CD8-positive, alpha-beta memory T cell (primary cell): ENCODE measurements at regions of chr10 and their contacts with region 1.

Region 1: DNA sequence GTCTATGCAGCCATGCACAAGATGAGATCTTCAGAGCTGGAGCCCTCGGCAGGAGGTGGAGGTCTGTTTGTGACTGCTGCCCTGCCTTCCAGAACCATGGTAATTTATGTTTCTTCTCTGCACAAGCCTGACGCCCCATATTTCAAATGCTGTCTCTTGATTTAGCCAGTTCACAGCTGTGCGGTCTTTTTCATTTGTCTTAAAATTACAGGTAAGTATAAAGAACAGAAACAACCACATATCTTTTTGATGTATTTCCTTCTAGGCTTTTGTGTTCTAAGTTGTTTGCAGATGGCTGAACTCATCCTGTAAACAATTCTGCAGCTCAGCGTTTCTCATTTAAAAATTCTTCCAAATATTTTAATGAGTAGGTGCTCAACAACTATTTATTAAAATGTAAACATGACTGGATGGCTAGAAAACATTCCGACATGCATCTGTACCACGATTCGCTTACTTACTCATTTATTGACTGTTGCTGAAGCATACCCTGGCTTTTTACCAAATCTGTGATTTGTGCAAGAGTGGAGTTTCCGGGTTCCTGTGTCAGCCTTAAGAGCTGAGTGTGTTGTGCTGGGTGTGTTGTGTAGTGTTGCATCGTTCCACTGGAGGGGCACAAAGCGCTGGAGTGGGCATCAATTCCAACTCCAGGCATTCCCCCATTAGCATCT is 58.9 kb downstream of the PIP4K2A start:
- DNase-seq: peak in 3 of 5 donors; percentile 66 to 87 (median 74)
- H3K4me3 ChIP-seq: peak overlapping the region; percentile 21
- H3K4me3 Mint-ChIP-seq: peak overlapping the region; percentile 72 to 90 (median 84)
- H3K27ac ChIP-seq: peak overlapping the region; percentile 12
- H3K27ac Mint-ChIP-seq: peak overlapping the region; percentile 88 to 99 (median 96)
- H3K4me1 ChIP-seq: peaks cover 98% of the 10 kb centered on the region
- H3K4me1 Mint-ChIP-seq: peaks cover 94 to 100% (median 100%) of the 10 kb centered on the region in 3 donors
- H3K27me3 ChIP-seq: no peaks in the 10 kb centered on the region
- H3K27me3 Mint-ChIP-seq: no peaks in the 10 kb centered on the region

Region 2: DNA sequence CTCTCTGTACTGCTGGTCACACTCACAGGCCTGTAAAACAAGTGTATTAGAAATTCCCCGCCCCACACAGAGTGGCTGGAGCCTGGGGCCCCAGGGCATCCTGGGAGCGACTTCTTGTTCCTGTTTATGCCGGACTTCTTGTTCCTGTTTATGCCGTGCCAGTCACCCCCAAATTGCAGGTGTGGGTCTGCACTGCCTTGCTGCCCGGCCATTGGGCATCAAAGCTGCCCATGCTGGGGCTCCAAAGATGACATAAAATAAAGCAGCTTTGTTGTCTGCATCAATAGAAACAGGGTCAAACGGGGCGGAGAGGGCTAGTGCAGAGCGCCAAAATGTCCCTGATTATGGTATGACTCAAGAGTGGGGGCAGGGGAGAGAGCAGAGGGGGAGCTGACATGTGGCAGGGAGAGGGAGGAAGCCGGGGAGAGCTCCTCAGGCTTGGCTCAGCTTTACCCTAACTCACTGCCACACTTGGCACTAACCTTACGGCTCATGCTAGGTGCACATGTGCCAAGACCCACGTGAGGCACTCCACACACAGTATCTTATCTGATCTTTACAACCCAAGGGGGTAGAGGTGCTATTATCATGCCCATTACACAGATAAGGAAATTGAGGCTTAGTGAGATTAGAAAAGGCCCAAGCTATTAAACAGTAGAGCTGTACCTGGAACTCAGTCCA is 39.5 kb before region 1 on chr10:
- CTCF ChIA-PET with region 1: interaction called, 20 read pairs
- POLR2A ChIA-PET with region 1: interaction called, 9 read pairs
- DNase-seq: peak in 4 of 5 donors; percentile 33 to 80 (median 52)
- H3K4me3 ChIP-seq: peak overlapping the region; percentile 37
- H3K4me3 Mint-ChIP-seq: peak overlapping the region; percentile 65 to 82 (median 76)
- H3K27ac ChIP-seq: peak overlapping the region; percentile 66
- H3K27ac Mint-ChIP-seq: peak overlapping the region; percentile 83 to 100 (median 97)
- H3K4me1 ChIP-seq: peaks cover 92% of the 10 kb centered on the region
- H3K4me1 Mint-ChIP-seq: peaks cover 97 to 100% (median 100%) of the 10 kb centered on the region in 3 donors
- H3K27me3 ChIP-seq: no peaks in the 10 kb centered on the region
- H3K27me3 Mint-ChIP-seq: peaks cover 0 to 2% of the 10 kb centered on the region in 2 donors

Region 3: GRCh38 chr10:22666287-22667092 is 11.0 kb after region 1 on chr10:
- CTCF ChIA-PET with region 1: interaction called, 8 read pairs
- POLR2A ChIA-PET with region 1: interaction called, 19 read pairs
- DNase-seq: peak; percentile 49 to 87 (median 81)
- H3K4me3 ChIP-seq: peak overlapping the region; percentile 49
- H3K4me3 Mint-ChIP-seq: peak overlapping the region; percentile 79 to 91 (median 84)
- H3K27ac ChIP-seq: peak overlapping the region; percentile 33
- H3K27ac Mint-ChIP-seq: peak overlapping the region; percentile 66 to 99 (median 90)
- H3K4me1 ChIP-seq: peaks cover 93% of the 10 kb centered on the region
- H3K4me1 Mint-ChIP-seq: peaks cover 83 to 100% (median 99%) of the 10 kb centered on the region in 3 donors
- H3K27me3 ChIP-seq: no peaks in the 10 kb centered on the region
- H3K27me3 Mint-ChIP-seq: no peaks in the 10 kb centered on the region

Region 4: DNA sequence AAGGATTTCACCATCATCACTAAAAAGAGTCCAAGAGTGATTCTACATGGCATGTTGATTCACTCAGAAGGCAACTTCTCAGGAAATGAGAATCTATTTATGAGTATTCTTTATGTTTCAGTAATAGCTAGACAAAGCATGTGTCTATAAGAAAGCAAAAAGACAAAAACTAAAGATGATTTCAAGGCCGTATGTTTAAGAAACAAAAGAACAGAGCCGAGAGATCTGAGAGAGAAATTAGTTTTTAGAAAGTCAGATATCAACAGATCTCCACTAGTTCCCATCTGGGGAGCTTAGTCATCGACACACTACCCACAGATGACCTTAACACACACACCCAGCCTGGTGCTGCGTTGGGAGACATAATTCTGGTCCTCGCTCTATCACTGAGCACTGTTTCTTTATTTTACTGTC is 37.9 kb after region 1 on chr10:
- CTCF ChIA-PET with region 1: interaction called, 12 read pairs
- POLR2A ChIA-PET with region 1: no interaction called
- DNase-seq: no peak
- H3K4me3 ChIP-seq: no peak overlapping the region
- H3K4me3 Mint-ChIP-seq: peak overlapping the region; percentile 17 to 79 (median 69)
- H3K27ac ChIP-seq: peak overlapping the region; percentile 3
- H3K27ac Mint-ChIP-seq: peak overlapping the region; percentile 79 to 98 (median 91)
- H3K4me1 ChIP-seq: peaks cover 93% of the 10 kb centered on the region
- H3K4me1 Mint-ChIP-seq: peaks cover 95 to 98% (median 98%) of the 10 kb centered on the region in 3 donors
- H3K27me3 ChIP-seq: no peaks in the 10 kb centered on the region
- H3K27me3 Mint-ChIP-seq: no peaks in the 10 kb centered on the region